PC-3 (cell line): ENCODE measurements at regions of chr3 and their contacts with region 1.

Region 1: GRCh38 chr3:57692259-57693147 is at the start of gene DENND6A:
- DNase-seq: peak; percentile 94
- ATAC-seq: peak; percentile 90
- H3K4me3 ChIP-seq: peak within 1 kb of the TSS; percentile 68
- H3K27ac ChIP-seq: peak within 1 kb of the TSS; percentile 90
- H3K4me1 ChIP-seq: peaks cover 27% of the 10 kb centered on the region
- H3K27me3 ChIP-seq: no peaks in the 10 kb centered on the region
- CTCF ChIP-seq: no peak
- total RNA-seq, gene DENND6A: 16.9 and 17.6 TPM in 2 replicates

Region 2: DNA sequence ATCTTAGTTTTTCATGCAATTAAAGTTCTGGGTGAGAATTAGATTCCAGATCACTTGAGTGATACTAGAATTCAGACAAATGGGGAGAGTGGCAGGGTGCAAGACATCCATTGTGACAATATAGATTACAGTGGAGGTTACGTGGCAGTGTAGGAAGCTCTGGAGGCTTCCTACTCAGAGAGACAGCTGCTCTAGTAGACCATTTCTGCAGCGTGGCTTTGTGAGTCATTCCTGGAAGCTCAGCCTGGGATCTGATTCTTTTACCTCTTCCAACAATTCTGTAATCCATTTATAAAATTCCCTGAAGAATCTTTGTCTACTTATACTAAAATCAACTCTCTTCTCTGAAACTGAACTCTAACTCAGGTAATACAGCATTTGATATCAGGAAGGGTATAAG is 309.6 kb before region 1 on chr3:
- CTCF ChIA-PET with region 1: no interaction called
- POLR2A ChIA-PET with region 1: interaction called, 22 read pairs
- intact Hi-C with region 1: no loop called
- DNase-seq: peak; percentile 9
- ATAC-seq: no peak
- H3K4me3 ChIP-seq: no peak overlapping the region
- H3K27ac ChIP-seq: no peak overlapping the region
- H3K4me1 ChIP-seq: no peaks in the 10 kb centered on the region
- H3K27me3 ChIP-seq: peaks cover 10% of the 10 kb centered on the region; the same call in 1 of the 2 replicates
- CTCF ChIP-seq: no peak

Region 3: DNA sequence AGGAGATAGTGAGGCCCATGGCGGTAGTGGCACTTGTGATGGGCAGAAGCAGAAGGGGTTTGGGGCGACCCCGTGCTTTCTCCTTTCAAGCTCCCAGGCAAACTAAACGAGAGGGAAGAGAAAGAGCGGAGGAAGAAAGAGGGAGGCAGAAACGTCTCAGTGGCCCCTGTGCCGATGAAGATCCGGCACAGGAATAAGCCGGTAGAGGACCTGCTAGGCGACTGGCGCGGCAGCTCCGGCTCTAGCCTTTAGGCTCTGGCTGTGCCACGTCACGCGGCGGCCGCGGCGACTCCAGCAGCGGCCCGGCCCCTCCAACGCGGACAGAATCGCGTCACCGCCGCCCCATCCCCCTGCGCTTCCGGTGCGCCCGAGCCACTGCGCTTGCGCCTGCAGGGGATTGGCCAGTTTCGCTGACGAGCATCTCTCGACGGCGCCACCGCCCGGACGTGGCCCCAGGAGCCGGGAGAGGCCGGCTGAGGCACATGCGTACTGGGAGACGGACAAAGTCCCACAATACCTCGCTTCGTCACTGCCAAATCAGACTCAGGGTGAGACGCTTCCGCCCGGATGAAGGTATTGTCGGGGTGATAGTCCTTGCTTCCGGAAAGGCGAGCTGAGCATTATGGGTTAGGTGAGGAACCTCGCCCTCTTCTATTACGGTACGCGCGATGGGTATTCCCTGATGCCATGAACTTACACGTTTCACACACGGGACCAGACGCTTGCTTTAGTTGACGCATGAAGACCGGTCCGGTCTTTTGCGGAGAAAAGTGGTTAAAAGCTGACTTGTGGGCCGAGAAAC is 95.2 kb before region 1 on chr3 and contains the start of gene ARF4:
- CTCF ChIA-PET with region 1: no interaction called
- POLR2A ChIA-PET with region 1: no interaction called
- intact Hi-C with region 1: loop called (anchors 5 kb)
- DNase-seq: peak; percentile 99
- ATAC-seq: peak; percentile 87
- H3K4me3 ChIP-seq: peak within 1 kb of the TSS; percentile 99
- H3K27ac ChIP-seq: peak within 1 kb of the TSS; percentile 93
- H3K4me1 ChIP-seq: peaks cover 28% of the 10 kb centered on the region
- H3K27me3 ChIP-seq: no peaks in the 10 kb centered on the region
- CTCF ChIP-seq: 0 out of 2 replicates have a peak, but pooled peaks have one; percentile 24
- total RNA-seq, gene ARF4: 130 and 135 TPM in 2 replicates

Region 4: DNA sequence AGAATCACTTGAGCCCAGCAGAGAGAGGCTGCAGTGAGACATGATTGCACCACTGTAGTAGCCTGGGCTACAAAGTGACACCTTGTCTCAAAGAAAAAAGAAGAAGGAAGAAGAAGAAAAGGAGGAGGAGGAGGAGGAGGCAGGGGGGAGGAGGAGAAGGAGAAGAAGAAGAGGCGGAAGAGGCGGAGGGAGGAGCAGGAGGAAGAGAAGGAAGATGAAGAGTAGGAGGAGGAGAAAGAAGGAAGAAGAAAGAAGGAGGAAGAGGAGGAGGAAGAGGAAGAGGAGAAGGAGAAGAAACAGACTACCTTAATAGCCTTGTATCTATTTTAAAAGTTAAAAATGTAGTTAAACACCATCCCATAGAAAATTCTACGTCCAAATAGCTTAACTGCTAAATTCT is 76.3 kb before region 1 on chr3:
- CTCF ChIA-PET with region 1: no interaction called
- POLR2A ChIA-PET with region 1: no interaction called
- intact Hi-C with region 1: no loop called
- DNase-seq: no peak
- ATAC-seq: no peak
- H3K4me3 ChIP-seq: no peak overlapping the region
- H3K27ac ChIP-seq: no peak overlapping the region
- H3K4me1 ChIP-seq: no peaks in the 10 kb centered on the region
- H3K27me3 ChIP-seq: no peaks in the 10 kb centered on the region
- CTCF ChIP-seq: no peak

Region 5: GRCh38 chr3:57826245-57826951 is 133.9 kb after region 1 on chr3:
- CTCF ChIA-PET with region 1: interaction called, 4 read pairs
- POLR2A ChIA-PET with region 1: no interaction called
- intact Hi-C with region 1: loop called (anchors 5 kb)
- DNase-seq: peak; percentile 26
- ATAC-seq: peak; percentile 33
- H3K4me3 ChIP-seq: no peak overlapping the region
- H3K27ac ChIP-seq: no peak overlapping the region
- H3K4me1 ChIP-seq: peaks cover 11% of the 10 kb centered on the region; the same call in 1 of the 2 replicates
- H3K27me3 ChIP-seq: no peaks in the 10 kb centered on the region
- CTCF ChIP-seq: peak; percentile 71

Region 6: DNA sequence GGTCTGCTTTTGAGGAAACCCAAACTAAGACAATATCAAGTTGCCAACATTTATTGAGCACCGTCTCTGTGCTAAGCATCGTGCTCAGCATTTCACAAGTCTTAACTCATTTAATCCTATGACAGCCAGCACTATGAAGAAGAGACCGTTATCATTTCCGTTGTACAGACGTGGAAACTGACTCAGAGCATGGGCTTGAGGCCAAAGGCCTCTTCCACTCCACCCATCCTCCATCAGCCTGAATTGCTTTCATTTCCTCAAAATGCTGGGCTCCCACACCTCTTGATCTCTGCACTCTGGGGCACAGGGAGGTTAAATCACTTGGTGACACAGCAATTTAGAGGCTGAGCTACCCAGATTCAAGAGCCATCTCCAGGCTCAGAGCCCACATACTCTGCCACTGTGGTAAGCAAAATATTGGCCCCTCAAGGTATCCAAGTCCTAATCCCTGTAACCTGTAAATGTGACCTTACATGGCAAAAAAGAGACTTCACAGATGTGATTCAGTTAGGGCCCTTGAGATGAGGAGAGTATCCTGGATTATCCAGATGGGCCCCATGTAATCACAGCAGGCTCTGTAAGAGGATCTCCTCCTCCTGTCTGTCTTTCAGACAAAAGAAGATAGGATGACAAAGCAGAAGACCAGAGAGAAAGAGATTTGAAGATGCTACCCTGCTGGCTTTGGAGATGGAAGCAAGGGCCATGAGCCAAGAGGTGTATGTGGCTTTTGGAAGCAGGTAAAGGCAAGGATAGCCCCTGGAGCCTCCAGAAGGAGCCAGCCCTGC is 291.4 kb after region 1 on chr3:
- CTCF ChIA-PET with region 1: no interaction called
- POLR2A ChIA-PET with region 1: interaction called, 12 read pairs
- intact Hi-C with region 1: no loop called
- DNase-seq: peak; percentile 87
- ATAC-seq: peak; percentile 78
- H3K4me3 ChIP-seq: no peak overlapping the region
- H3K27ac ChIP-seq: peak overlapping the region; percentile 73
- H3K4me1 ChIP-seq: peaks cover 43% of the 10 kb centered on the region
- H3K27me3 ChIP-seq: no peaks in the 10 kb centered on the region
- CTCF ChIP-seq: no peak

Region 7: DNA sequence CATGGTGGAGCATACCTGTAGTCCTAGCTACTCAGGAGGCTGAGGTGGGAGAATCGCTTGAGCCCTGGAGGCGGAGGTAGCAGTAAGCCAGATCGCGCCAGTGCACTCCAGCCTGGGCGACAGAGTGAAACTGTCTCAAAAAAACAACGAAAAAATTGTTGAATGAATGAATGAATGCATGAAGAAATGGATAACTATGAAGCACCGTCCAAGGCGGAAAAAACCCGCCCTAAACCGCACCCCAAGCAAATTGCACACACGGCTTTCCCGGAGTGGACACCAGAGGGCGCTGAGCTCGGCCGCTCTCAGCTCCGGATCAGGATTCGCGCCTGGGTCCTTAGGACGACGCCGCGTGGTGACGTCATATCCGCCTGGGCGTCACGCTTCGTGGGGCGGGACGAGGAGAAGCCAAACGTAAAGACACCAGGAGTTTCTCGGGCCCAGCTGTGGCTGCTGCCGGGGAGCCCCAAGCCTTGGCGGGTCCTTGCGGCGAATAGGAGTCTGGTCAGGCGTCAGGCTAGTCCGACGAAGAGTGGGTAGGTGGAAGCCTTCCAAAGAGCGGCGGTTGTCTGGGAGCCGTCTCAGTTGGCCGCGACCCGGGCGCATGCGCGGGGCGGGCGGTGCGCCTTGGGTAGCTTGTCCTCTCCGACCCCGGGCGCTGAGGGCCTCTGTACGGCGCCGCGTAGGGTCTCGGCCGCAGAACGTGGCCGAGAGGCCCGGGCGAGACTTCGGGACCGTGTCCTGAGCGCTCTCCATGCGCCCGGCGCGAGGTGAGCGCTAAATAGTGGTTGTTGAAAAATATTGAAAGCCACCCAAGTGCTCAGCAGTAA is 613.6 kb after region 1 on chr3 and contains the starts of genes HTD2 and RPP14:
- CTCF ChIA-PET with region 1: no interaction called
- POLR2A ChIA-PET with region 1: no interaction called
- intact Hi-C with region 1: no loop called
- DNase-seq: peak; percentile 99
- ATAC-seq: peak; percentile 92
- H3K4me3 ChIP-seq: peak within 1 kb of the TSS; percentile 95
- H3K27ac ChIP-seq: peak within 1 kb of the TSS; percentile 75
- H3K4me1 ChIP-seq: peaks cover 11% of the 10 kb centered on the region
- H3K27me3 ChIP-seq: no peaks in the 10 kb centered on the region
- CTCF ChIP-seq: peak; percentile 90
- total RNA-seq, gene HTD2: 4.9 and 6.9 TPM in 2 replicates
- total RNA-seq, gene RPP14: 28.8 and 30.0 TPM in 2 replicates

Region 8: GRCh38 chr3:58366699-58367098 is 674.2 kb after region 1 on chr3:
- CTCF ChIA-PET with region 1: no interaction called
- POLR2A ChIA-PET with region 1: no interaction called
- intact Hi-C with region 1: no loop called
- DNase-seq: no peak
- ATAC-seq: no peak
- H3K4me3 ChIP-seq: no peak overlapping the region
- H3K27ac ChIP-seq: no peak overlapping the region
- H3K4me1 ChIP-seq: no peaks in the 10 kb centered on the region
- H3K27me3 ChIP-seq: no peaks in the 10 kb centered on the region
- CTCF ChIP-seq: no peak